Natural killer cell (primary cell): ENCODE measurements at regions of chr11 and their contacts with region 1.

Region 1: DNA sequence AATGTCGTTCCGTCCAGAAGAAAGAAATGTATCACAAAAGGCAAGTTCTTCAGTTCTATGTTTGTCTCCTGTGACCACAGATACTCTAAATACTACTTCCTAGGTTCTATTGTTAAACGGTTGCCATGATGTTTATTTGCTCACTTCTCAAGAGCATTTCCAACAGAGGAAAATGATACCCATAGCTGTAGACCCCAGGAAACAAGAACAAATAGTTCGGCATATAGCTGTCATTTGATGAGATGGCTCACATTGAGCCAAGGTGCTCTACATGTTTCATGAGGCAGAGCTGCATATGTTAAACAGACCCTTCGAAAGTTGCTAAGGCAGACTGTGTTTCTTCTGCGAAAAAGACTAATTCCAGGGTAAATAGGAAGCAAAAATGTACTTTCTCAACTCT is 15.4 kb upstream of the ANGPTL5 start:
- DNase-seq: no peak
- ATAC-seq: no peak
- H3K4me3 ChIP-seq: no peak overlapping the region
- H3K4me3 Mint-ChIP-seq: no peak overlapping the region
- H3K27ac ChIP-seq: no peak overlapping the region
- H3K27ac Mint-ChIP-seq: no peak overlapping the region
- H3K4me1 ChIP-seq: no peaks in the 10 kb centered on the region
- H3K4me1 Mint-ChIP-seq: peaks cover 7 to 14% of the 10 kb centered on the region in 2 donors
- H3K27me3 ChIP-seq: no peaks in the 10 kb centered on the region
- H3K27me3 Mint-ChIP-seq: no peaks in the 10 kb centered on the region
- CTCF ChIP-seq: no peak

Region 2: GRCh38 chr11:101974255-101974654 is 42.6 kb after region 1 on chr11:
- intact Hi-C with region 1: loop called (anchors 1 kb)
- DNase-seq: no peak
- ATAC-seq: no peak
- H3K4me3 ChIP-seq: no peak overlapping the region
- H3K4me3 Mint-ChIP-seq: no peak overlapping the region
- H3K27ac ChIP-seq: no peak overlapping the region
- H3K27ac Mint-ChIP-seq: no peak overlapping the region
- H3K4me1 ChIP-seq: no peaks in the 10 kb centered on the region
- H3K4me1 Mint-ChIP-seq: no peaks in the 10 kb centered on the region
- H3K27me3 ChIP-seq: no peaks in the 10 kb centered on the region
- H3K27me3 Mint-ChIP-seq: no peaks in the 10 kb centered on the region
- CTCF ChIP-seq: no peak